ENCODE measurements at regions of chr10 and their contacts with region 1.

Region 1: DNA sequence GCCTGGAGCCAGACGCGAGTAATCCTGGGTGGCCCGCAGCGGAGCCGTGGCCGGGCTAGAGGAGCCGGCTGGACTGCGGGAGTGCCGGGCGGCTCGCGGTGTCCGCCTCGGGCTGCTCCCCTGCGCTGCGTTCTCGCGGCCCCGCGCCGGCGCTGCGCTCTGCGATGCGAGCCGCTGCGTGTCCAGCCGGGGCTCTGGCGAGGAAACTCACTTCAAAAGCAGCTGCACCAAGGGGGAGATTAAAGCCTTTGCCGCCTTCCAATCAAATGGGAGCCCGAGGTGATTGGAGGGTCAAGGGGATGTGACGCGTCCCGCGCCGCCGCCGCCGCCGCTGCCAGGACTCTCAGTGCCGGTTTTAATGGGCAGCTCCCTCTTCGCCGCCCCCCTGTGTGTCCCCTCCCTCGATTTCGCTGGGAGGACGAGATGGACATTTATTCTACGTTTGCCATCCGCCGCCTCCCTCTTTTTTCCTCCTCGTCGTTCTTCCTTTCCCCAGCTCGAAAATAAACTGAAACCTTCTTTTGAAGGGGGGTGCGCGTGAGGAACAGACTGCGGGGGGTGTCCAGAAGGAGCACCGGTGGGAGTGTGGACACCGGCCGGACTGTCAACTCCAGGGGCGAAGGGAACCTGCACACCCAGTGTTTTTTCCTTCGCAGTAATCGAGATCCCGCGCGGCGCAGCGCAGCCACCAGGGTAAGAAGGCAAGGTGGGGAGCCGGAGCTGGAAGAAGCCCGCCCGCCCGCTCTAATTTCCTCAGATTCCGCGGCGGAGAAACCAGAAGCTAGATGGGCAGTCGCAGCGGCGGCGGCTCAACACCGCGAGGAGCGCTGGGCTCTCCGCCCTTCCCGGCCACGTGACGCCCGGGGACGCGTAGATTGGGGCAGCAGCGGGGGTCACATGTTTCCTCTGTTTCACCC is at the start of gene ZNF503:
- DNase-seq: peak; percentile 100
- ATAC-seq: peak; percentile 39
- H3K4me3 ChIP-seq: peak within 1 kb of the TSS; percentile 79
- H3K27ac ChIP-seq: peak within 1 kb of the TSS; percentile 81
- H3K4me1 ChIP-seq: peaks cover 15% of the 10 kb centered on the region
- H3K27me3 ChIP-seq: peaks cover 96% of the 10 kb centered on the region
- CTCF ChIP-seq: 0 out of 2 replicates have a peak, but pooled peaks have one; percentile 24
- total RNA-seq, gene ZNF503: 42.3 and 72.1 TPM in 2 replicates

Region 2: DNA sequence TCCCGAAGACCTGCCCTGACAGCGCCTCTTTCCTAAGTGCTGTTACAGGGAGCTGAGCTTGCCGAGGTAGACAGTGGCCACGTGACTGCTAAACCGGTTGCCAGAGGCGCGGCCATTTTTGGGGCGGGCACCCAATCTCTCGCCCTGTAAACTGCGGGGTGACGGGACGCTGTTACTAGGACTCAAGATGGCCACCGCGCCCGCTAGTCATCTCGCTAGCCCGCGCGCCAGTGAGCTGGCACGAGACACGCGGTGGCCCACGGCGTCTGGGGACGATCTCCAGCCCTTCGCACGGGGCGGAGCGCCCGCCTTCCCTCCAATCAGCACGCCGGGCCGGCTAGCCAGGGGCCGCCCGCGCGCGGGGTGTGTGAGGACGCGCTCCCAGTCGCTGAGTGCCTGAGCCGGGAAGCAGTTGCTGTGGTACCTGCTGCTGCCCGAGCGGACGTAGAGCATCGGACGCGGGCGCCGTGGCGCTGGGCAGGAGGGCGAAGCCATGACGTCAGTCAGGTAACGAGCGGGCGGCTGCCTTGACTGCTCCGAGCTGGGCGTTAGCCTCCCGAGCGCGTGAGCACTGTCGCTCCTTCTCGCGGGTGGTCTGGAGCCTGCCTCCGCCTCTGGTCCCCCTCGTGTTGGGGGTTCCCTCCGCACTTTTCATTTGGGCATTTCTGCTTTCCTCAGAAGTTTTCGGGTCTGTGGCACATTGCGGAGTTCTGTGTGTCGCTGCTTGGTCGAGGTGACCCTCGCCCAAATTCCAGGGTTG is 1225.3 kb before region 1 on chr10:
- CTCF ChIA-PET with region 1: no interaction called
- POLR2A ChIA-PET with region 1: no interaction called
- intact Hi-C with region 1: loop called (anchors 5 kb)
- DNase-seq: peak; percentile 100
- ATAC-seq: peak; percentile 94
- H3K4me3 ChIP-seq: peak overlapping the region; percentile 69
- H3K27ac ChIP-seq: peak overlapping the region; percentile 76
- H3K4me1 ChIP-seq: peaks cover 40% of the 10 kb centered on the region
- H3K27me3 ChIP-seq: no peaks in the 10 kb centered on the region
- CTCF ChIP-seq: 0 out of 2 replicates have a peak, but pooled peaks have one; percentile 6

Region 3: DNA sequence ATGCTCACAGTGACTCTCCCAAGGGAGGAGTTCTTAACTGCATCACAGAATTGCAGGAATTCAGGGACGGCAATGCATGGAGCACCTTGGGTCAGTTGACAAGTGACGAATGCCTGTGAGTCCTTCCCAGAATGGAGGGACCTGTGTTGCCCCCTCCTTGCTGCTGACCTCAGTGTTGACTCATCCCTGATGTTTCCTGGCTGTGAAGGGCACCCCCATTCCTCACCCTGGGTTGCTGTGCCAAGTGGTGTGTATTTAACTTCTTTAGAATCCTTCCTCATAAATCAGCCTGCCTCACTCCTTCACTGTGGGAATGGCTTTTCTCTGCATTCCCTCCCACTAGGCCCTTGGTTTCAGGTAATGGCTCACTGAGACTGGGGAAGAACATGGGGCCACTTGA is 128.5 kb after region 1 on chr10:
- CTCF ChIA-PET with region 1: no interaction called
- POLR2A ChIA-PET with region 1: interaction called, 4 read pairs
- intact Hi-C with region 1: loop called (anchors 2 kb)
- DNase-seq: peak; percentile 98
- ATAC-seq: peak; percentile 69
- H3K4me3 ChIP-seq: no peak overlapping the region
- H3K27ac ChIP-seq: peak overlapping the region; percentile 85
- H3K4me1 ChIP-seq: peaks cover 45% of the 10 kb centered on the region
- H3K27me3 ChIP-seq: no peaks in the 10 kb centered on the region
- CTCF ChIP-seq: no peak

Region 4: GRCh38 chr10:75910032-75910431 is 508.2 kb after region 1 on chr10:
- CTCF ChIA-PET with region 1: interaction called, 7 read pairs
- POLR2A ChIA-PET with region 1: interaction called, 9 read pairs
- intact Hi-C with region 1: loop called (anchors 1 kb)
- DNase-seq: peak; percentile 90
- ATAC-seq: peak; percentile 36; the same call in 1 of the 2 replicates
- H3K4me3 ChIP-seq: no peak overlapping the region
- H3K27ac ChIP-seq: no peak overlapping the region
- H3K4me1 ChIP-seq: peaks cover 7% of the 10 kb centered on the region
- H3K27me3 ChIP-seq: peaks cover 74% of the 10 kb centered on the region
- CTCF ChIP-seq: no peak

Region 5: DNA sequence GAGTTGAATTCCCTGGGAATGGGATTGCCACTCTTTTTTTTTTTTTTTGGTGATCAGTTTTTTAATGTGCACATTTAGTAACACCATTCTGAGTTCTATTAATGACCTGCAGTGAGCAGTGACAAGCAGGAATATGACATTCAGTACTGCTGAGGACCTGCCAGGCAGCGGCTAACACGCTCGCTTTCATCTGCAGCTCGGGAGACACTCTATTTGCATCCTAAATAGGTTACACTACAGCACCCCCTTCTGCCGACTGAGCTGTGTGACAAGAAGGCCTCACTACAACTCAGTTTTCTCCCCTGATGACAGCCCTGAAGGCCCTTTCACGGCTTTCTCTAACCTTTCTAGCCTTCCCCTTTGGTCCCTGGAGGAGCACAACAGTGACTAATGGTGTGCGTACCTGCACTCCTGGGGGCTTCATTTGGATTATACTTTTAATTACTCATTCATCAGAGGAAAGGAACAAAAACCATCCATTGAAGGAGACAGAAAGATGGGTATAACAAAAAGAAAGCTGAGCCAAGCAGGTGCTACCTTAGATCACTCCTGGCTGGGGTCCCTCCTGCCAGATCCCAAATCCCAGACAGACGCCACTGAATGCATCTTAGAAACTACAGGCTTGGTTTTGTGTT is 902.0 kb after region 1 on chr10:
- CTCF ChIA-PET with region 1: interaction called, 4 read pairs
- POLR2A ChIA-PET with region 1: no interaction called
- intact Hi-C with region 1: loop called (anchors 2 kb)
- DNase-seq: peak; percentile 98
- ATAC-seq: peak; percentile 98
- H3K4me3 ChIP-seq: no peak overlapping the region
- H3K27ac ChIP-seq: no peak overlapping the region
- H3K4me1 ChIP-seq: peaks cover 4% of the 10 kb centered on the region; the same call in 1 of the 2 replicates
- H3K27me3 ChIP-seq: peaks cover 13% of the 10 kb centered on the region; the same call in 1 of the 2 replicates
- CTCF ChIP-seq: peak; percentile 100

Region 6: GRCh38 chr10:77111611-77112550 is 1710.1 kb after region 1 on chr10:
- CTCF ChIA-PET with region 1: no interaction called
- POLR2A ChIA-PET with region 1: no interaction called
- intact Hi-C with region 1: loop called (anchors 5 kb)
- DNase-seq: peak; percentile 99
- ATAC-seq: peak; percentile 78
- H3K4me3 ChIP-seq: peak overlapping the region; percentile 4; the same call in 1 of the 2 replicates
- H3K27ac ChIP-seq: peak overlapping the region; percentile 69
- H3K4me1 ChIP-seq: peaks cover 25% of the 10 kb centered on the region
- H3K27me3 ChIP-seq: no peaks in the 10 kb centered on the region
- CTCF ChIP-seq: peak; percentile 100